ENCODE measurements at regions of chr4 and their contacts with region 1.

Region 1: GRCh38 chr4:56387023-56388001 is at the start of gene AASDH:
- DNase-seq: peak; percentile 92 to 98 (median 94)
- ATAC-seq: peak; percentile 95
- H3K4me3 ChIP-seq: peak within 1 kb of the TSS; percentile 94
- H3K4me3 Mint-ChIP-seq: peak within 1 kb of the TSS; percentile 87 to 99 (median 96)
- H3K27ac ChIP-seq: peak within 1 kb of the TSS; percentile 92
- H3K27ac Mint-ChIP-seq: peak within 1 kb of the TSS; percentile 97 to 100 (median 98)
- H3K4me1 ChIP-seq: peaks cover 15 to 18% of the 10 kb centered on the region in 2 donors
- H3K4me1 Mint-ChIP-seq: peaks cover 19 to 60% (median 47%) of the 10 kb centered on the region in 7 donors
- H3K27me3 ChIP-seq: no peaks in the 10 kb centered on the region
- H3K27me3 Mint-ChIP-seq: no peaks in the 10 kb centered on the region
- total RNA-seq, gene AASDH: 10.2 to 24.7 (median 15.8) TPM

Region 2: DNA sequence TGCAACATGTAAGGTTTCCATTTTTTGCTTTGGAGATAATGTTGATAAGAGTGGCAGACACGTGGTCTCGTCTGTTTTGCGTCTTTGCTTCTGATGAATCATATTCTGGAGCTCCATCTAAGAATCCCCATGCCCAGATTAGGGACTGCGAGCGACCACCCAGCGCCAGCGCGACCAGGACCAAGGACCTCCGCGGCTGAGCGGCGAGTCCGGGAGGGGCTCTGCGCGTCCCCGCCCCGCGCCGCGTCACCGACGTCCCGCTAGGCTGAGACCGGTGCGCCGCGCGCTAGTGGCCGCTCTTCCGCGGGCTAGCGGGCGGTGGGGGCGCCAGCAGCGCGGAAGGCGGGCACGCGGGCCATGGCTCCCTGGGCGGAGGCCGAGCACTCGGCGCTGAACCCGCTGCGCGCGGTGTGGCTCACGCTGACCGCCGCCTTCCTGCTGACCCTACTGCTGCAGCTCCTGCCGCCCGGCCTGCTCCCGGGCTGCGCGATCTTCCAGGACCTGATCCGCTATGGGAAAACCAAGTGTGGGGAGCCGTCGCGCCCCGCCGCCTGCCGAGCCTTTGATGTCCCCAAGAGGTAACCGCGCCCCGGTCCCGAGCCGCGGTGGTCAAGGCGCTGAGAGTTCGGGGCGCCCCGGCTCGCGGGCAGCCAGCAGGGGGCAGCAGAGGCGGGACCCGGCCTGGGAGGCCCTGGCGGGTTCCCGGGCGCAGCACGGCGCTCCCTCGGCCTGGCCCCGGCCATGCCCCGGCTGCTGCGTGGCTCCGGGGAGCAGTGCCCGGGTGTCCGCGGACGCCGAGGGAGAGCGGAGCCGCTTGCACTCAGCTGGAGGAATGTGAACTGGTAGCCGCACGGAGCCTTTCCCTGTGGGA is 1041.1 kb before region 1 on chr4 and contains the start of gene SRD5A3:
- CTCF ChIA-PET with region 1: no interaction called
- POLR2A ChIA-PET with region 1: no interaction called
- intact Hi-C with region 1: loop called (anchors 5 to 10 kb)
- DNase-seq: peak; percentile 53 to 92 (median 72)
- ATAC-seq: peak; percentile 97
- H3K4me3 ChIP-seq: peak within 1 kb of the TSS; percentile 79
- H3K4me3 Mint-ChIP-seq: peak within 1 kb of the TSS; percentile 83 to 94 (median 90)
- H3K27ac ChIP-seq: peak within 1 kb of the TSS; percentile 69
- H3K27ac Mint-ChIP-seq: peak within 1 kb of the TSS; percentile 70 to 91 (median 87)
- H3K4me1 ChIP-seq: peaks cover 6 to 8% of the 10 kb centered on the region in 2 donors
- H3K4me1 Mint-ChIP-seq: peaks cover 8 to 23% (median 19%) of the 10 kb centered on the region in 7 donors
- H3K27me3 ChIP-seq: no peaks in the 10 kb centered on the region
- H3K27me3 Mint-ChIP-seq: no peaks in the 10 kb centered on the region
- total RNA-seq, gene SRD5A3: 1.9 to 8.5 (median 4.5) TPM

Region 3: GRCh38 chr4:55853484-55854046 is 533.7 kb before region 1 on chr4 and contains the start of gene EXOC1:
- CTCF ChIA-PET with region 1: no interaction called
- POLR2A ChIA-PET with region 1: no interaction called
- intact Hi-C with region 1: loop called (anchors 1 to 5 kb)
- DNase-seq: peak; percentile 93 to 98 (median 94)
- ATAC-seq: peak; percentile 99
- H3K4me3 ChIP-seq: peak within 1 kb of the TSS; percentile 84
- H3K4me3 Mint-ChIP-seq: peak within 1 kb of the TSS in 2 of 10 donors; percentile 34 to 69
- H3K27ac ChIP-seq: peak within 1 kb of the TSS; percentile 87
- H3K27ac Mint-ChIP-seq: peak within 1 kb of the TSS in 7 of 9 donors; percentile 75 to 94 (median 90)
- H3K4me1 ChIP-seq: peaks cover 26 to 31% of the 10 kb centered on the region in 2 donors
- H3K4me1 Mint-ChIP-seq: peaks cover 22 to 48% (median 42%) of the 10 kb centered on the region in 7 donors
- H3K27me3 ChIP-seq: no peaks in the 10 kb centered on the region
- H3K27me3 Mint-ChIP-seq: no peaks in the 10 kb centered on the region
- total RNA-seq, gene EXOC1: 20.3 to 46.7 (median 32.1) TPM

Region 4: DNA sequence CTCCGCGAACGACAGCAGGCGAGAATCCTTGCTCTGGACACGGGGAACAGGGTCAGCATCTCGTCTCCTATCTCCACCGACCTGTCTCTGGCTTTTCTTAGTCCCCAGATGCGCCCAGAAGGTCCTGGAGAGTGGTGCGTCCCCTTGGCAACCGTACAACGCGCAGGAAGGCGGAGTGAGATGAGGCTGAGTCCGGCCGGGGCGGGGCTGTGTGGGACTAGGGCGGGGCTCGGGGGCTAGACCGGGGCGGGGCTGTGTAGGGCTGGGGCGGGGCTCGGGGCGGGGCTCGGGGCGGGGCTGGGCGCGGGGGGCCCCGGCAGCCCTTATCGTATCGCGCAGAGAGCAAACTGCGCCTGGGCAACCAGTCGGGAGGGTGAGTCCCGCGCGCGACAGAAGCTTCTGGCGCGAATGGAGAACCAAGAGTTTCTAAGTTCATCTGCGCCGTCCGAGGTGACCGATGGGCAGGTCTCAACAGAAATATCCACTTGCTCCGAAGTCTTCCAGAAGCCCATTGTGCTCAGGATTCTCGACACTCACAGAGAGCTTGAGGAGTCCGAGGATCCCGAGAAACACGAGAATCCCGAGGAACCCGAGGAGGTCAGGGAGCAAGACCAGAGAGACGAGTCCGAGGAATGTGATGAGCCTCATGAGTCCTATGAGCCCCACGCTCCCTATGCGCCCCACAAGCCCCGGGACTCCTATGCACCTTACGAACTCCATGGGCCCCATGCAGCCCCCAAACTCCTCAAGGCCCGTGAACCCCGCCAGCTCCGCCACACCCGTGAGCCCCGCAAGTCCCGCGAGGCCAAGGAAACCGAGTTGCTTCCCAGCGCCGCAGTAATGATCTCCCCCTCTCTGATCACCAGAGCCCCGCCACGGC is 143.2 kb after region 1 on chr4:
- CTCF ChIA-PET with region 1: no interaction called
- POLR2A ChIA-PET with region 1: interaction called, 4 read pairs
- intact Hi-C with region 1: loop called in 1 of 2 experiments (anchors 1 kb)
- DNase-seq: peak; percentile 53 to 75 (median 59)
- ATAC-seq: peak; percentile 99
- H3K4me3 ChIP-seq: peak overlapping the region; percentile 91
- H3K4me3 Mint-ChIP-seq: peak overlapping the region in 1 of 10 donors; percentile 70
- H3K27ac ChIP-seq: peak overlapping the region; percentile 44
- H3K27ac Mint-ChIP-seq: peak overlapping the region in 3 of 9 donors; percentile 26 to 55 (median 38)
- H3K4me1 ChIP-seq: peaks cover 0 to 4% of the 10 kb centered on the region in 2 donors
- H3K4me1 Mint-ChIP-seq: peaks cover 0 to 2% (median 0%) of the 10 kb centered on the region in 7 donors
- H3K27me3 ChIP-seq: peaks cover 0 to 4% of the 10 kb centered on the region in 2 donors
- H3K27me3 Mint-ChIP-seq: peaks cover 0 to 22% (median 7%) of the 10 kb centered on the region in 5 donors

Region 5: GRCh38 chr4:56757821-56758411 is 370.6 kb after region 1 on chr4:
- CTCF ChIA-PET with region 1: no interaction called
- POLR2A ChIA-PET with region 1: interaction called, 4 read pairs
- intact Hi-C with region 1: loop called in 1 of 2 experiments (anchors 2 kb)
- DNase-seq: peak; percentile 12 to 85 (median 68)
- ATAC-seq: peak; percentile 88
- H3K4me3 ChIP-seq: peak overlapping the region; percentile 46
- H3K4me3 Mint-ChIP-seq: peak overlapping the region; percentile 71 to 91 (median 85)
- H3K27ac ChIP-seq: peak overlapping the region; percentile 65
- H3K27ac Mint-ChIP-seq: peak overlapping the region; percentile 76 to 99 (median 92)
- H3K4me1 ChIP-seq: peaks cover 28 to 29% of the 10 kb centered on the region in 2 donors
- H3K4me1 Mint-ChIP-seq: peaks cover 39 to 76% (median 57%) of the 10 kb centered on the region in 7 donors
- H3K27me3 ChIP-seq: no peaks in the 10 kb centered on the region
- H3K27me3 Mint-ChIP-seq: peaks cover 0 to 14% (median 0%) of the 10 kb centered on the region in 5 donors

Measured in naive thymus-derived CD4-positive, alpha-beta T cell (primary cell).